Endothelial cell of umbilical vein (primary cell): ENCODE measurements at regions of chr1 and their contacts with region 1.

Region 1: DNA sequence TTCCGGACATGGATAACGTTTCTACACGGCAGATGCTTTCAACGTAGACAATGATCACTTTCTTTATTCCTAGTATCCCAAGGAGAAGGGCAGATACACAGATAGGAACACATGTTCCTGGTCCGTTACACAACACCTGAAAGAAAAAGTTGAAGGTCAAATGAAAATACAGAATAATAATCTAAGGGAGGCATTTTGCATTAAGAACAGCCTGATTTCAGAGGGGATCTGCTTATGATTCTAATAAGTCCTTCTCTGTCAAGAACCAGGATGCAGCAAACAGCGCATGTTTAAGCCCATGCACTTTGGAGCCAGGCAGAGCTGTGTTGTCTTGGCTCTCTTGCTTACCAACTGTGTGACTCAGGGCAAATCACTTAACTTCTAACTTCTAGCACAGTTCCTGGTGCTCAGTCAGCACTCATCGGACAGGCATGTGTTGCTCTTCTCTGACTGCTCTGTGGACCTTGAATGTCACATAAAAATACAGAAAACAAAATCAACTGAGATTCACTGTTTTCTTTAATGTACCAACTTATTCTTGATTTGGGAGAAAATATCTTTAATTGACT is 56.3 kb upstream of the CNN3 start:
- DNase-seq: peak; percentile 29
- H3K4me3 ChIP-seq: no peak overlapping the region
- H3K27ac ChIP-seq: no peak overlapping the region
- H3K4me1 ChIP-seq: peaks cover 35% of the 10 kb centered on the region
- H3K27me3 ChIP-seq: no peaks in the 10 kb centered on the region
- CTCF ChIP-seq: no peak
- POLR2A ChIP-seq: no peak

Region 2: DNA sequence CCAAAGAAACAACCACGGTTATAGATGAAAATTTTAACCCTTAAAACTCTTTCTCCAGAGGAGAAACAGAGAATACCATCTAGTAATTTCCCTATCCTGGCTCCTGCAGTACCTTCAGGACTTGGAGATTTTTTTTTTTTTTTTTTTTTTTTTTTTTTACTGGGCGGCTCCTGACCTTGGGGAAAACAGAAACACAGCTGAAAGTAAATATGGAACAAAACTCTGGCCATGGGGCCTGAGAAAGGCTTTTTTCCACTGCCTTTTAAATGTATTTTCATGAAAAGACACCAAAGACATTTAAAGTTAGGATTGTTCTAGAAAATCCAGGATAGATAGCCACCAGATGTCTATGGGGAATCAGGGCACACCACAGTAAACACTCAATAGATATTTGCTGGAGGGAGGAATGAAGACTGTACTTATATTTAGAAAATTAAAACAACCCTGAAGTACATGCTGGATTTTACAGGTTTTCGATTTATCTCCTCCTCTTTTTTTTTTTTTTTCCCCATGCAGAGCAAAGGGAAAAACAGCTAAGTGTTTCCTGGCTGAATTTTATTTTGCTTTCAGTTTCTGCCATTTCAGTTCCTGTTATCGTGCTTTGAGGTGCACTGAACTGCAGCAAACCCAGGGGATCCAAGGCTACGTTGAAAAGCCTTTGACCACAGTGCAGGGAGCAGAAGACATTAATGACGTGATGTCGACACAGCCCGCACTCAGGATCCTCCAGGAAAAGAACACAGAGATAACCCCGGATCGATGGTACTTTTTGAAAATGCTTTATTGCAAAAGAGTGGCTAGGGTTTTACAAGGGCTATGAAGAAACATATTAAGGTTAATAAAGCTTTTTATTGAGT is 20.6 kb before region 1 on chr1:
- CTCF ChIA-PET with region 1: no interaction called
- POLR2A ChIA-PET with region 1: interaction called, 7 read pairs
- dilution Hi-C with region 1: no loop called
- intact Hi-C with region 1: loop called (anchors 2 kb)
- DNase-seq: peak; percentile 75
- H3K4me3 ChIP-seq: peak overlapping the region; percentile 22 to 68 (median 25)
- H3K27ac ChIP-seq: peak overlapping the region; percentile 48
- H3K4me1 ChIP-seq: peaks cover 23% of the 10 kb centered on the region
- H3K27me3 ChIP-seq: no peaks in the 10 kb centered on the region
- CTCF ChIP-seq: no peak
- POLR2A ChIP-seq: no peak

Region 3: GRCh38 chr1:94971491-94971924 is 11.7 kb before region 1 on chr1:
- CTCF ChIA-PET with region 1: no interaction called
- POLR2A ChIA-PET with region 1: no interaction called
- dilution Hi-C with region 1: no loop called
- intact Hi-C with region 1: loop called (anchors 1 kb)
- DNase-seq: peak; percentile 55
- H3K4me3 ChIP-seq: peak overlapping the region in 1 of 3 experiments; percentile 5
- H3K27ac ChIP-seq: peak overlapping the region; percentile 27
- H3K4me1 ChIP-seq: peaks cover 29% of the 10 kb centered on the region
- H3K27me3 ChIP-seq: no peaks in the 10 kb centered on the region
- CTCF ChIP-seq: no peak
- POLR2A ChIP-seq: no peak

Region 4: DNA sequence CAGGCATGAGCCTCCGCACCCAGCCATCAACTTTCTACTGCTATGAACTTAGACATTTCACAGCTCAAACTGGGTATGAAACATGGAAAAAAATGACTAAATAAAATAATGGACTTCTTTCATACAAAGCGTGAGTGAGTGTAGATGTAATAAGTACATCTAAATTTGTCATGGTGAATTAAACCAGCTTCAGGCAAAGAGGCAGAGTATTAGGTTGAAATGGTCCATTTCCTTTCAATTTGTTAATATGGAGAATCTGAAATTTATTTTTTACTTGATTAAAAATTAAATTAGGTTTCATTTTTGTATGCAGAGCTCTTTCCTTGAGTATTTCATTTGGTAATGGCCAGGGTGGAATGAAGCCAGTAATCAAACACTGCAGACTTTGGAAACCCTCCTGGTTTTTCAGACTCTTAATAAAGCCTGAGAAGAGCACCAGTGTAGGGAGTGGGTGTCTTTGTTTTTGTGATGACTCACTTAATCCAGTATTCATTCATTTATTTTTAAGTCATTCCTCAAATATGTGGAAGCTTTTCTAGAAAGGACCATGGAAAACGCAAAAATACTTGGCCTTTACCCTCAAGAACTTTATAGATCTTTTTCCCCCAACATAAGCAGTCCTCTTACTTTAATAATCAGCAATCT is 40.3 kb after region 1 on chr1:
- CTCF ChIA-PET with region 1: no interaction called
- POLR2A ChIA-PET with region 1: no interaction called
- dilution Hi-C with region 1: no loop called
- intact Hi-C with region 1: loop called (anchors 5 kb)
- DNase-seq: peak; percentile 77
- H3K4me3 ChIP-seq: no peak overlapping the region
- H3K27ac ChIP-seq: no peak overlapping the region
- H3K4me1 ChIP-seq: peaks cover 39% of the 10 kb centered on the region
- H3K27me3 ChIP-seq: no peaks in the 10 kb centered on the region
- CTCF ChIP-seq: no peak
- POLR2A ChIP-seq: no peak